CD4-positive, alpha-beta memory T cell (primary cell): ENCODE measurements at regions of chr11 and their contacts with region 1.

Region 1: GRCh38 chr11:46700241-46701077 is at the starts of genes ARHGAP1 and ZNF408:
- DNase-seq: peak; percentile 98 to 100 (median 99)
- H3K4me3 ChIP-seq: peak within 1 kb of the TSS; percentile 82 to 98
- H3K4me3 Mint-ChIP-seq: peak within 1 kb of the TSS; percentile 92 to 100 (median 99)
- H3K27ac ChIP-seq: peak within 1 kb of the TSS; percentile 86
- H3K27ac Mint-ChIP-seq: peak within 1 kb of the TSS; percentile 88 to 99 (median 96)
- H3K4me1 ChIP-seq: peaks cover 66% of the 10 kb centered on the region
- H3K4me1 Mint-ChIP-seq: peaks cover 32 to 73% (median 48%) of the 10 kb centered on the region in 4 donors
- H3K27me3 ChIP-seq: no peaks in the 10 kb centered on the region
- H3K27me3 Mint-ChIP-seq: no peaks in the 10 kb centered on the region
- total RNA-seq, gene ARHGAP1: 61.3 to 72.2 TPM
- total RNA-seq, gene ZNF408: 18.9 to 20.0 TPM

Region 2: GRCh38 chr11:46593550-46594373 is 106.7 kb before region 1 on chr11 and contains the start of gene AMBRA1:
- CTCF ChIA-PET with region 1: interaction called, 4 read pairs
- POLR2A ChIA-PET with region 1: interaction called, 11 read pairs
- intact Hi-C with region 1: no loop called
- DNase-seq: peak; percentile 79 to 86 (median 81)
- H3K4me3 ChIP-seq: peak within 1 kb of the TSS; percentile 78 to 99
- H3K4me3 Mint-ChIP-seq: peak within 1 kb of the TSS; percentile 94 to 99 (median 98)
- H3K27ac ChIP-seq: peak within 1 kb of the TSS; percentile 83
- H3K27ac Mint-ChIP-seq: peak within 1 kb of the TSS; percentile 90 to 97 (median 95)
- H3K4me1 ChIP-seq: peaks cover 47% of the 10 kb centered on the region
- H3K4me1 Mint-ChIP-seq: peaks cover 26 to 47% (median 40%) of the 10 kb centered on the region in 4 donors
- H3K27me3 ChIP-seq: no peaks in the 10 kb centered on the region
- H3K27me3 Mint-ChIP-seq: no peaks in the 10 kb centered on the region
- total RNA-seq, gene AMBRA1: 40.8 to 43.9 TPM

Region 3: GRCh38 chr11:46675288-46675851 is 25.1 kb before region 1 on chr11:
- CTCF ChIA-PET with region 1: interaction called, 61 read pairs
- POLR2A ChIA-PET with region 1: interaction called, 85 read pairs
- intact Hi-C with region 1: loop called (anchors 1 kb)
- DNase-seq: no peak
- H3K4me3 ChIP-seq: no peak overlapping the region
- H3K4me3 Mint-ChIP-seq: peak overlapping the region in 3 of 8 donors; percentile 5 to 76 (median 75)
- H3K27ac ChIP-seq: peak overlapping the region; percentile 20
- H3K27ac Mint-ChIP-seq: peak overlapping the region in 6 of 7 donors; percentile 27 to 97 (median 94)
- H3K4me1 ChIP-seq: peaks cover 71% of the 10 kb centered on the region
- H3K4me1 Mint-ChIP-seq: peaks cover 41 to 79% (median 66%) of the 10 kb centered on the region in 4 donors
- H3K27me3 ChIP-seq: no peaks in the 10 kb centered on the region
- H3K27me3 Mint-ChIP-seq: no peaks in the 10 kb centered on the region

Region 4: DNA sequence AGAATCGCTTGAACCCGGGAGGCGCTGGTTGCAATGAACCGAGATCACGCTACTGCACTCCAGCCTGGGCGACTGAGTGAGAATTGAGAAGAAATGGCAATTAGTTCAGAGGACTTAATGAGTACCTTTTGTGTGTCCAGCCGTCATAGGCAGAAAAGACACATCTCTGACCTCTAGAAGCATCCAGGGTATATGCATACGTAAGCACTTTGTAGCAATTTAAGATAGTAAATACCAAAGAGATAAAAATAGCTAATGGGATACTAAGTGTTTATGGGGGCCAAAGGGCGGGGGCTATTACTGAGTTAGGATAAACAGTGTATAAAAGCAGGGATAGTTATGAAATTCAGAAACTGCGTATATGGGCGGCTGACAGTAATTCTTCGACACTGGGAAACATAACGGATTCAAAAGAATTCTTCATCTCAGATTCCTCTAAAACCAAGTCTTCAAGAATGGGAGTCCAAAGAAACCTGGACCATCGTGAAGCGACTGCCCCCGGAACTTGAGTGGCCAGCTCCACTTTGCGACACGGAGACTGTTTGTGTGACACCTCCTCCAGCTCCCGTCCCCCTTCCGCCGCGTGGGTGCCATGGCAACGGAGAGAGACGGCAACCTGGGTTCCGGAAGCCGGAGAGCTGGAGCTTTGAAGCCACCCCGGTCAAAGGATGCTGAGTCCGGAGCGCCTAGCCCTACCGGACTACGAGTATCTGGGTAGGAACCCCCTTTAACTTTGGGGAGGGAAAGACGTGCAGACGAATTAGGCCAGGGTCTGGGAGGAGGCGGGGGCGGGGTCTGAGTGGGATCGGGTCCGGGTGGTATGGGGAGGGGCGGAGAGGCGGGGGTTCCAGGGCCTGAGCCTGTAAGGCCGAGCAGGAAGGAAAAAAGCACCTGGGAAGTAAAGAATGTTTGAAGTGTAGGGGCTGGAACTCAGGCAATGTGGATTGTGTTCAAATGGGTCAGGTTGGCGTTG is 236.0 kb after region 1 on chr11 and contains the start of gene CSTPP1:
- CTCF ChIA-PET with region 1: no interaction called
- POLR2A ChIA-PET with region 1: no interaction called
- intact Hi-C with region 1: loop called (anchors 1 kb)
- DNase-seq: peak; percentile 87 to 91 (median 88)
- H3K4me3 ChIP-seq: peak within 1 kb of the TSS; percentile 39 to 50
- H3K4me3 Mint-ChIP-seq: peak within 1 kb of the TSS; percentile 91 to 97 (median 94)
- H3K27ac ChIP-seq: peak within 1 kb of the TSS; percentile 41
- H3K27ac Mint-ChIP-seq: peak within 1 kb of the TSS; percentile 88 to 97 (median 96)
- H3K4me1 ChIP-seq: peaks cover 12% of the 10 kb centered on the region
- H3K4me1 Mint-ChIP-seq: peaks cover 14 to 24% (median 17%) of the 10 kb centered on the region in 4 donors
- H3K27me3 ChIP-seq: no peaks in the 10 kb centered on the region
- H3K27me3 Mint-ChIP-seq: peaks cover 0 to 7% of the 10 kb centered on the region in 2 donors
- total RNA-seq, gene CSTPP1: 12.4 to 12.8 TPM